Activated CD4-positive, alpha-beta memory T cell treated with anti-CD3 and anti-CD28 coated beads, Interleukin-2, amount 10 ng/mL, durations not matched to agents 7 days and 5 days (primary cell): ENCODE measurements at regions of chr1 and their contacts with region 1.

Region 1: DNA sequence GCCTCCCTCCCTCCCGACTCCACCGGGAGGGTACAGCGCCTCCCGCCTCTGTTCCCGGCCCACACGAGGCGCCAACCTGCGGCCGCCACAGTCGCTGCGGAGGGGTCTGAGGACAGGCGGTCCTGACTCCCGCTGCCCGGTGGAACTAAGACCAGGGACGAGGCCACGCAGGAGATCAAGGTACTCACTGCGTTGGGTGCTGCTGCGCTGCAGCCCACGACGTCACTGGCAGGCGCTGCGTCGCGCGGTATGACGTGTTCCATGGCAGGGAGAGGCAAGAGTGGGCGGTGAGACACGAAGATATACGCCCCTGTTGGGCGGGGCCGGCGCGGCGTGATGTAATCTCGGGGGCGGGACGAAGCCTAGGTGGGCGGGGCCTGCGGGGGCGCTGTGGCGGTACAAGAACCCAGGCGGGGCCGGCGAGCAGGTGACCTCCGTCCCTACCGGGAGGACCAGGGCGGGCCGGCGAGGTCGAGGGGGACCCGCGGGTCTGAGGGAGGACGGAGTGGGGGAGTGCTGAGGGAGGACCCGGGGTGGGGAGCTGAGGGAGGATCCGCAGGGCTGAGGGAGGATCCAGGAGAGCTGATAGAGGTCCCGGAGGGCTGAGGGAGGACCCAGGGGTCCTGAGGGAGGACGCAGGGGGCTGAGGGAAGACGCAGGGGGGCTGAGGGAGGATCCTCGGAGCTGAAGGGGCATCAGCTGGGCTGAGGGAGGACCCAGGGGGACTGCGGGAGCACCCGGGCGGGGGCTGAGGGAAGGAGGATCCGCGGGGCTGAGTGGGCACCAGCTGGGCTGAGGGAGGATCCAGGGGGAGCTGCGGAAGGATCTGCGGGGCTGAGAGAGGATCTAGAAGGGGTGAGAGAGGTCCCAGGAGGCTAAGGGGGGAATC is at the start of gene MRPL55:
- DNase-seq: peak; percentile 99
- H3K4me3 Mint-ChIP-seq: peak within 1 kb of the TSS; percentile 87
- H3K27ac Mint-ChIP-seq: peak within 1 kb of the TSS; percentile 79
- H3K4me1 Mint-ChIP-seq: peaks cover 43% of the 10 kb centered on the region
- H3K27me3 Mint-ChIP-seq: no peaks in the 10 kb centered on the region
- total RNA-seq, gene MRPL55: 43.1 to 43.9 TPM

Region 2: GRCh38 chr1:228131766-228132165 is 22.4 kb after region 1 on chr1:
- CTCF ChIA-PET with region 1: interaction called, 10 read pairs
- POLR2A ChIA-PET with region 1: interaction called, 4 read pairs
- DNase-seq: no peak
- H3K4me3 Mint-ChIP-seq: no peak overlapping the region
- H3K27ac Mint-ChIP-seq: no peak overlapping the region
- H3K4me1 Mint-ChIP-seq: peaks cover 4% of the 10 kb centered on the region
- H3K27me3 Mint-ChIP-seq: peaks cover 21% of the 10 kb centered on the region

Region 3: GRCh38 chr1:228185641-228185965 is 76.3 kb after region 1 on chr1:
- CTCF ChIA-PET with region 1: no interaction called
- POLR2A ChIA-PET with region 1: no interaction called
- DNase-seq: peak; percentile 64
- H3K4me3 Mint-ChIP-seq: no peak overlapping the region
- H3K27ac Mint-ChIP-seq: no peak overlapping the region
- H3K4me1 Mint-ChIP-seq: peaks cover 15% of the 10 kb centered on the region
- H3K27me3 Mint-ChIP-seq: no peaks in the 10 kb centered on the region